PC-9 (cell line): ENCODE measurements at regions of chr14 and their contacts with region 1.

Region 1: GRCh38 chr14:74754157-74754556 is 9.0 kb upstream of the YLPM1 start:
- DNase-seq: no peak
- H3K4me3 ChIP-seq: no peak overlapping the region
- H3K27ac ChIP-seq: no peak overlapping the region
- H3K4me1 ChIP-seq: no peaks in the 10 kb centered on the region
- H3K27me3 ChIP-seq: no peaks in the 10 kb centered on the region
- CTCF ChIP-seq: no peak

Region 2: GRCh38 chr14:75283882-75284563 is 529.9 kb after region 1 on chr14:
- CTCF ChIA-PET with region 1: interaction called, 10 read pairs
- POLR2A ChIA-PET with region 1: no interaction called
- intact Hi-C with region 1: no loop called
- DNase-seq: peak; percentile 49 to 78
- H3K4me3 ChIP-seq: no peak overlapping the region
- H3K27ac ChIP-seq: peak overlapping the region; percentile 46
- H3K4me1 ChIP-seq: peaks cover 47% of the 10 kb centered on the region
- H3K27me3 ChIP-seq: no peaks in the 10 kb centered on the region
- CTCF ChIP-seq: no peak; the same call in 1 of the 2 replicates